Right ventricle myocardium inferior (tissue), 1 donor: ENCODE measurements at regions of chr1 and their contacts with region 1.

Region 1: DNA sequence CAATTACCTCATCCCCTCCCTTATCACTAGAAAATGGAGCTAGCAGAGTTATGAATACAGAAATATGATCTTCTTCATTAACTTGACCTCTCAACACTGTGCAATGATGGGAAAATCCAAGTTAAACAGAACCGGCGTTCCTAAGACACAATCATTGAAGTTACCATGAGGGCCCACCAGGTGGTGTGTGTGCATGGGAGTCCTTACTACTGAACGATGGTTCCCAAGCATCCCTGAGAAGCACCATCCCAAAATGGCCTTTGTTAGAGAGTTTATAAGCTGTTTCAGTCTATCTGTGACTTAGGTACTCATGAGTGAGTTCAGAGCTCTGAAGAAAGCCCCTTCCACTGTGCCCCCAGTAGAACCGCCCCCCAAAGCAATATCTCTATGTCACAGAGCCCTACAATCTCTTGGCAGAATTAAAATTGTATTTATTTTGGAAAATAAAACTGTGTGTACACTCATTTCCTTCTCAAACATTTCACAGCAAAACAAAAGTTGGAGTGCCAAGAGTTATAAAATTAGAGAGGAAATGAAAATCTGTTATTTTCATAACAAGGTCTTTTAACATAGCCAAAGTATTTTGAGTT is 56.8 kb downstream of the PLD5 start:
- DNase-seq: no peak
- ATAC-seq: peak; percentile 72

Region 2: GRCh38 chr1:242239394-242239793 is 228.3 kb before region 1 on chr1:
- intact Hi-C with region 1: no loop called
- DNase-seq: no peak
- ATAC-seq: no peak

Region 3: GRCh38 chr1:242448910-242449645 is 18.6 kb before region 1 on chr1:
- intact Hi-C with region 1: no loop called
- DNase-seq: no peak
- ATAC-seq: no peak

Region 4: GRCh38 chr1:242489545-242489944 is 21.9 kb after region 1 on chr1:
- intact Hi-C with region 1: no loop called
- DNase-seq: no peak
- ATAC-seq: no peak

Region 5: DNA sequence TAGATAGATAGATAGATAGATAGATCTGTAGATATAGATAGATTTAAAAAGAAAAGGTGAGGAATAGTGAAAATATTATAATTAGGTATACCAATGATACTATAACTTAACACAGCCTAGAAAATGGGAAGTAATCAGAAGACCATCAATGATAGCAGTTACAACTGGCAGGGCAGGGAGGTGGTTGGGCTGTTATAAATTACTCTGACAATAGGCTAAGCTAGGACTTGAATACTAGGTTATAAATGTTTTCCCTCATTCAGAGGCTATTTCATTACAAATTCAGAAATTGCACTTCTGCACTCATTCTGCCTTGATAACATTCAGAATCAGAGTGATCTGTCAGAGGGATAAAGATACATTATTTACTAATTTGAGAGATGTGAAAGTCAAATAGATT is 330.2 kb after region 1 on chr1:
- intact Hi-C with region 1: loop called (anchors 10 kb)
- DNase-seq: no peak
- ATAC-seq: no peak